Ovary (tissue), 10 donors: ENCODE measurements at regions of chr2 and their contacts with region 1.

Region 1: GRCh38 chr2:219177552-219178376 is at the start of gene RETREG2:
- DNase-seq: peak; percentile 88 to 91 (median 89)
- H3K4me3 ChIP-seq: peak within 1 kb of the TSS; percentile 97
- H3K27ac ChIP-seq: peak within 1 kb of the TSS; percentile 87 to 94
- H3K4me1 ChIP-seq: peaks cover 8% of the 10 kb centered on the region
- H3K27me3 ChIP-seq: no peaks in the 10 kb centered on the region
- CTCF ChIP-seq: peak in 2 of 3 donors; percentile 46 to 70
- EP300 ChIP-seq: no peak
- POLR2A ChIP-seq: peak; percentile 99
- total RNA-seq, gene RETREG2: 40.9 to 106 (median 95.6) TPM

Region 2: DNA sequence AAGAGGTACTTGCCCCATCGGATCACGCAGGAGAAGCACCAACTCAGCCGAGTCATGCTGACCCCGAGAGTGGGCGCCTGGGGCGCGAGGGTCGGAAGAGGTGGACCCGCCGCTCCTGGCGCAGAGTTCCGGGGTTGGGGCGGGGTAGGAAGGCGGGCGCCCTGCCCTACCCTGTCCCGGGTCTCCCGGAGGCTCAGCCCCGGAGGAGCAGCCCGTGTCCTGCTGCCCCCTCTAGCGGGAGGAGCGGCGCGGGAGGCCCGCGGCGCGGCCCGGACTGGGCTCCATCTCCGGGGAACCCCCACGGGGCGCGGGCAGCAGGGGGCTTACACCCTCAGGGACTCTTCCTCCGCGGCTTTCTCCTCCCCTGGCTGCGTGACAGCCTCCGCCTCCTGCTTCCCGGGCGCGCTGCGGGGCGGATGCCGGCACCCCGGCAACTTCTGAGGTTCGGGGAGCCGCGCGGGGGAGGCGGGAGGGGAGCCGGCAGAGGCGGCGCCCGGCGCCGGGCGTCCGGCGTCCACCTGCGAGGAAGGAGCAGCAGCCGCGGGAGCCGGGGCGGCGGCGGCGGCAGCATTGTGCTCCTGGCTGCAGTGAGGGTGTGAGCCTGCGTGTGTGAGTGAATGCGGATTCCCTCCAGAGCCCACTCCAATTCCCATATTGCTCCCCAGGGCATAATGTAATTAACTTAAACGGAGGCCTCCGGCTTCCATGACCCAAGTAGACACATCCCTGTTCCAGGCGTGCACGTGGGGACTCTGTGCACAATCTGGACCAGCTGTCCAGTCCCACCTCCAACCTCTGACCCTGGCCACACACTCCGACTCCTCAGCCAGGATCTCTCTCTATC is 1167.4 kb before region 1 on chr2:
- intact Hi-C with region 1: loop called in 1 of 4 experiments (anchors 10 kb)
- DNase-seq: peak; percentile 75 to 85 (median 83)
- H3K4me3 ChIP-seq: peak overlapping the region; percentile 44
- H3K27ac ChIP-seq: peak overlapping the region in 1 of 2 donors; percentile 44
- H3K4me1 ChIP-seq: peaks cover 2% of the 10 kb centered on the region
- H3K27me3 ChIP-seq: no peaks in the 10 kb centered on the region
- CTCF ChIP-seq: peak; percentile 72 to 86 (median 83)
- EP300 ChIP-seq: no peak
- POLR2A ChIP-seq: no peak

Region 3: GRCh38 chr2:219160186-219161017 is 17.4 kb before region 1 on chr2 and contains the start of gene NHEJ1:
- intact Hi-C with region 1: loop called in 1 of 4 experiments (anchors 2 kb)
- DNase-seq: peak; percentile 97 to 99 (median 98)
- H3K4me3 ChIP-seq: peak within 1 kb of the TSS; percentile 66
- H3K27ac ChIP-seq: peak within 1 kb of the TSS; percentile 87 to 93
- H3K4me1 ChIP-seq: peaks cover 5% of the 10 kb centered on the region
- H3K27me3 ChIP-seq: no peaks in the 10 kb centered on the region
- CTCF ChIP-seq: peak; percentile 94 to 99 (median 95)
- EP300 ChIP-seq: no peak
- POLR2A ChIP-seq: peak; percentile 62
- total RNA-seq, gene NHEJ1: 14.7 to 19.1 (median 17.1) TPM

Region 4: GRCh38 chr2:219218732-219219701 is 41.3 kb after region 1 on chr2 and contains the start of gene ABCB6:
- intact Hi-C with region 1: loop called in 2 of 4 experiments (anchors 5 kb)
- DNase-seq: peak; percentile 99 to 100 (median 99)
- H3K4me3 ChIP-seq: peak within 1 kb of the TSS; percentile 53
- H3K27ac ChIP-seq: peak within 1 kb of the TSS; percentile 54 to 88
- H3K4me1 ChIP-seq: peaks cover 2% of the 10 kb centered on the region
- H3K27me3 ChIP-seq: no peaks in the 10 kb centered on the region
- CTCF ChIP-seq: no peak
- EP300 ChIP-seq: no peak
- POLR2A ChIP-seq: peak; percentile 53
- total RNA-seq, gene ABCB6: 12.0 to 64.5 (median 37.2) TPM

Region 5: DNA sequence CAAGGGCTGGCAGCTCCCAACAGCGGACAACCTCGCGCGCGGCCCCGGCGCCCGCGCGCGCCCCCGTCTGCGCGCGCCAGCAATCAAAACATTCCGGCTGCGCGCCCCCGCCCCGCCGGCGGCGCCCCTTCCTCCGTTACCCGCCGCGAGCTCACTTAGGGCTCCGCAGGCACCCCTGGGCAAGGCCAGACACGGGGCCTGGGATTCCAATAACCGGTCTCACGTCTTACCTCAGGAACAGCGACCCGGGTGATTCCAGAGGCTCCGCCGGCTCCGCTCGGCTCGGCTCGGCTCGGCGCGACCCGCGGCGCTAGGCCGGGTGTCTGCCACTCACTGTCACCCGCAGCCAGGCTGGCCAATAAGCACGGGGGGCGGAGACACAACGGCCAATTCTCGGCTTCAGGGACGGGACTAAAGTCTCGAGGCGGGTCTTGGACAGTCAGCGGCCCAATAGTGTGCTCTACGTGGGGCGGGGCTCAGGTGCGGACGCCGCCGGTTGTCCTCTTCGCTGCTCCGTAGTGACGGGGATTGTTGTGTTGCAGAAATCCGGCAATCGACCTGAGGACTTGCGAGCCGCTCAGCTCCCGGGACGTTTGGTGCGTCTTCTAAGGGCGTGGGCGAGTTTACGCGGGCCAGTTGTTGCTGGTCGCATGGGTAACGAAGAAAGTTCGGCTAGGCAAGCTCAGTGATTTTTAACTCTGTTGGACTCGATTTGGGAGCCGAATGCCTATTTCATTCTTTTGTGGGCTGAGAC is 51.7 kb after region 1 on chr2 and contains the starts of genes ANKZF1 and ATG9A:
- intact Hi-C with region 1: loop called in 1 of 4 experiments (anchors 5 kb)
- DNase-seq: peak; percentile 97 to 99 (median 98)
- H3K4me3 ChIP-seq: peak within 1 kb of the TSS; percentile 68
- H3K27ac ChIP-seq: peak within 1 kb of the TSS; percentile 34 to 94
- H3K4me1 ChIP-seq: peaks cover 8% of the 10 kb centered on the region
- H3K27me3 ChIP-seq: no peaks in the 10 kb centered on the region
- CTCF ChIP-seq: no peak
- EP300 ChIP-seq: no peak
- POLR2A ChIP-seq: peak; percentile 79
- total RNA-seq, gene ANKZF1: 36.4 to 60.2 (median 44.1) TPM
- total RNA-seq, gene ATG9A: 22.6 to 44.6 (median 32.6) TPM